ENCODE measurements at regions of chr17 and their contacts with region 1.

Region 1: GRCh38 chr17:64920026-64920418 is 744 bp upstream of the LRRC37A3 start:
- DNase-seq: no peak
- H3K4me3 ChIP-seq: peak overlapping the region; percentile 51 to 98
- H3K27ac ChIP-seq: peak overlapping the region in 1 of 2 experiments; percentile 55; a peak in 2 of 4 replicates
- H3K4me1 ChIP-seq: 0 out of 4 replicates have a peak, but pooled peaks cover 0 to 5% of the 10 kb centered on the region in 2 experiments
- H3K27me3 ChIP-seq: no peaks in the 10 kb centered on the region
- CTCF ChIP-seq: no peak
- EP300 ChIP-seq: no peak
- RAD21 ChIP-seq: no peak

Region 2: GRCh38 chr17:64437944-64438525 is 482.0 kb before region 1 on chr17:
- CTCF ChIA-PET with region 1: no interaction called
- POLR2A ChIA-PET with region 1: no interaction called
- DNase-seq: no peak
- H3K4me3 ChIP-seq: no peak overlapping the region
- H3K27ac ChIP-seq: no peak overlapping the region
- H3K4me1 ChIP-seq: no peaks in the 10 kb centered on the region
- H3K27me3 ChIP-seq: no peaks in the 10 kb centered on the region
- CTCF ChIP-seq: no peak
- EP300 ChIP-seq: no peak
- RAD21 ChIP-seq: no peak

Region 3: DNA sequence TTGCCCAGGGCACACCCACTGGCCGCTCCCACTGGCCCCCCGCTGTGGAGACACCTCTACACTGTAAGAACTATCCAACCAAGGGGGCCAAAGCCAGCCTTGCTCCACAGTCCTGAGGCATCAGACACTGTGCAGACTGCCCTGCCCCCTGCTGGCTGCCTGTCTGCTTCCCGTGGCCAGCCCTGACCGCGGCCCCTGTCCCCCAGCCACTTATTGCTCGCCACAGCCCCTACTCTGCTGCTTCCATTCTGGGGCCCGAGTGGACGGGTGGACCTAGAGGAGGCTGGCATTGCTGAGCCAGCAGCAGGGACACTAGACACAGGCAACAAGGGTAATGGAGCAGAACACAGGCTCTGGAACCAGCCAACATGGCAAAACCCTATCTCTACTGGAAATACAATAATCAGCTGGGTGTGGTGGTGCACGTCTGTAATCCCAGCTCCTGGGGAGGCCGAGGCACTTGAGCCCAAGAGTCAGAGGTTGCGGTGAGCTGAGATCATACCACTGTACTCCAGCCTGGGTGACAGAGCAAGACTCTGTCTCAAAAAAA is 19.0 kb after region 1 on chr17:
- CTCF ChIA-PET with region 1: interaction called, 14 read pairs
- POLR2A ChIA-PET with region 1: no interaction called
- DNase-seq: peak; percentile 62
- H3K4me3 ChIP-seq: peak overlapping the region in 1 of 2 experiments; percentile 21; a peak in 1 of 4 replicates
- H3K27ac ChIP-seq: no peak overlapping the region
- H3K4me1 ChIP-seq: no peaks in the 10 kb centered on the region; a peak in 1 of 4 replicates
- H3K27me3 ChIP-seq: no peaks in the 10 kb centered on the region
- CTCF ChIP-seq: peak; percentile 68
- EP300 ChIP-seq: no peak
- RAD21 ChIP-seq: peak; percentile 49

Region 4: GRCh38 chr17:64968652-64969501 is 48.9 kb after region 1 on chr17:
- CTCF ChIA-PET with region 1: interaction called, 59 read pairs
- POLR2A ChIA-PET with region 1: interaction called, 4 read pairs
- DNase-seq: no peak
- H3K4me3 ChIP-seq: no peak overlapping the region
- H3K27ac ChIP-seq: no peak overlapping the region
- H3K4me1 ChIP-seq: peaks cover 7 to 13% of the 10 kb centered on the region in 2 experiments; a peak in 2 of 4 replicates
- H3K27me3 ChIP-seq: no peaks in the 10 kb centered on the region
- CTCF ChIP-seq: no peak
- EP300 ChIP-seq: no peak
- RAD21 ChIP-seq: no peak

Region 5: GRCh38 chr17:64975329-64976087 is 55.5 kb after region 1 on chr17:
- CTCF ChIA-PET with region 1: no interaction called
- POLR2A ChIA-PET with region 1: interaction called, 18 read pairs
- DNase-seq: peak; percentile 99
- H3K4me3 ChIP-seq: peak overlapping the region; percentile 68 to 74
- H3K27ac ChIP-seq: peak overlapping the region; percentile 86 to 95
- H3K4me1 ChIP-seq: peaks cover 3 to 5% of the 10 kb centered on the region in 2 experiments; a peak in 1 of 4 replicates
- H3K27me3 ChIP-seq: no peaks in the 10 kb centered on the region
- CTCF ChIP-seq: no peak
- EP300 ChIP-seq: no peak; a peak in 1 of 4 replicates
- RAD21 ChIP-seq: no peak; the same call in 1 of the 2 replicates